Thyroid gland (tissue), 4 donors: ENCODE measurements at regions of chr17 and their contacts with region 1.

Region 1: GRCh38 chr17:47305302-47305923 is 18.3 kb upstream of the EFCAB13 start:
- DNase-seq: peak in 1 of 2 donors; percentile 47
- H3K4me3 ChIP-seq: no peak overlapping the region
- H3K27ac ChIP-seq: peak overlapping the region; percentile 78 to 93 (median 85)
- H3K4me1 ChIP-seq: peaks cover 14 to 31% of the 10 kb centered on the region in 2 donors
- H3K27me3 ChIP-seq: no peaks in the 10 kb centered on the region
- CTCF ChIP-seq: no peak
- POLR2A ChIP-seq: no peak

Region 2: DNA sequence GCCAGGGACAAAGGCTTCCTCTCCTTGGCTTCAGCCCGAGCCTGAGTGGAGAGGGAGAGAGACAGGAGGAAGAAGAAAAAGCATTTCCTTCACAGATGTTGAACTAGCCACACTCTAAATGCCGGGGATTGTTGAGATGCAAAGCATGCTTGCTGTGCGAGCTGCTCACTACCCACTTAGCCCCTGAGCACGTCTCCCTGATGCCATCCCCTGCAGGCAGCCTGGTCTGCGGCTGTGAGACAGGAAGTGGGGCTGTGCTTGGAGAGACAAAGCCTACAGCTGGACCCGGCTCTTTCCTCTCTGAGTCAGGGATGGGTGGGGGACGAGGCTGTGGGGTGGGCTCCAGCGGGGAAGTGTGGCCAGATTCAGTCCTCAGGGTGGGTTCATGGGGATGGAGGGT is 440.3 kb before region 1 on chr17:
- intact Hi-C with region 1: no loop called
- DNase-seq: no peak
- H3K4me3 ChIP-seq: no peak overlapping the region
- H3K27ac ChIP-seq: no peak overlapping the region
- H3K4me1 ChIP-seq: no peaks in the 10 kb centered on the region
- H3K27me3 ChIP-seq: no peaks in the 10 kb centered on the region
- CTCF ChIP-seq: no peak
- POLR2A ChIP-seq: no peak

Region 3: DNA sequence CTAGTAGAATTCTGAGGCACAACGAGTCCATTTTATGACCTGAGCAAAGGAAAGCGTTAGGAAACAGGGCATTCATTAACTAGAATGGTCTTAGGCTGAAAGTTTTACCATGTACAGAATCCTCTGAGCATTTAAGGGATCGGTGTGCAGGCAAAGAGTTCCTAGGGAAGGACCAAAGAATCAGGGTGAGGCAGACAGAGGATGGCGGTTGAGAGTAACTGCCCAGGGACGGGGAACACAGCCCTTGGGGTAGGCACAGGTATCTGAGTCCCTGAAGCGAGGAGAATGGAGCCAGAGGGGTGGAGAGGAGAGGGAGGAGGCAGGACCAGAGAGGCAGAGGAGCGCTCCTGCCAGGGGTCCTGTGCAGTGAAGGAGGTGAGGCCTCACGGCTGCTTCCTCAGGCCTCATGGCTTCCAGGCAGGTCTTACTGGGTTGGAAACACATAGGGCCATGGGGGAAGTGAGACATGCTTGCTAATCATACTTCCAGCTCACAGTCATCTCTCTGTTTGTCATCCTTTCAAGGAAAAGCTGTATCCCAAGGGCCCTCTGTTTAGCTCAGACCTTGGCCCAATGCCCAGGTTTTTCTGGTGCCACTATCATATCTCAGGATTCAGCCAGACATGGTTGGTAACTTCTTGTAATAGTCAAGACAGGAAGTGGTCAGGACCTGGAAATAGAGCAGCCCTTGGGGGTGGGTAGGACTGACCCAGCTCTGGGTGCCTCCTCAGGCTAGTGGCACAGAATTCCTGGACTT is 65.6 kb before region 1 on chr17:
- intact Hi-C with region 1: loop called (anchors 5 kb)
- DNase-seq: peak; percentile 85 to 89
- H3K4me3 ChIP-seq: no peak overlapping the region
- H3K27ac ChIP-seq: peak overlapping the region; percentile 28 to 89 (median 71)
- H3K4me1 ChIP-seq: peaks cover 0 to 19% of the 10 kb centered on the region in 2 donors
- H3K27me3 ChIP-seq: no peaks in the 10 kb centered on the region
- CTCF ChIP-seq: no peak
- POLR2A ChIP-seq: no peak

Region 4: GRCh38 chr17:47253541-47254402 is 51.6 kb before region 1 on chr17 and contains the start of gene ITGB3:
- intact Hi-C with region 1: no loop called
- DNase-seq: peak; percentile 82 to 84
- H3K4me3 ChIP-seq: peak within 1 kb of the TSS; percentile 67 to 85 (median 82)
- H3K27ac ChIP-seq: peak within 1 kb of the TSS; percentile 87 to 98 (median 95)
- H3K4me1 ChIP-seq: peaks cover 23 to 32% of the 10 kb centered on the region in 2 donors
- H3K27me3 ChIP-seq: no peaks in the 10 kb centered on the region
- CTCF ChIP-seq: peak in 3 of 6 experiments; percentile 43 to 59 (median 57)
- POLR2A ChIP-seq: peak; percentile 59 to 93
- total RNA-seq, gene ITGB3: 102 to 260 (median 149) TPM